Sigmoid colon (tissue), 7 donors: ENCODE measurements at regions of chr2 and their contacts with region 1.

Region 1: DNA sequence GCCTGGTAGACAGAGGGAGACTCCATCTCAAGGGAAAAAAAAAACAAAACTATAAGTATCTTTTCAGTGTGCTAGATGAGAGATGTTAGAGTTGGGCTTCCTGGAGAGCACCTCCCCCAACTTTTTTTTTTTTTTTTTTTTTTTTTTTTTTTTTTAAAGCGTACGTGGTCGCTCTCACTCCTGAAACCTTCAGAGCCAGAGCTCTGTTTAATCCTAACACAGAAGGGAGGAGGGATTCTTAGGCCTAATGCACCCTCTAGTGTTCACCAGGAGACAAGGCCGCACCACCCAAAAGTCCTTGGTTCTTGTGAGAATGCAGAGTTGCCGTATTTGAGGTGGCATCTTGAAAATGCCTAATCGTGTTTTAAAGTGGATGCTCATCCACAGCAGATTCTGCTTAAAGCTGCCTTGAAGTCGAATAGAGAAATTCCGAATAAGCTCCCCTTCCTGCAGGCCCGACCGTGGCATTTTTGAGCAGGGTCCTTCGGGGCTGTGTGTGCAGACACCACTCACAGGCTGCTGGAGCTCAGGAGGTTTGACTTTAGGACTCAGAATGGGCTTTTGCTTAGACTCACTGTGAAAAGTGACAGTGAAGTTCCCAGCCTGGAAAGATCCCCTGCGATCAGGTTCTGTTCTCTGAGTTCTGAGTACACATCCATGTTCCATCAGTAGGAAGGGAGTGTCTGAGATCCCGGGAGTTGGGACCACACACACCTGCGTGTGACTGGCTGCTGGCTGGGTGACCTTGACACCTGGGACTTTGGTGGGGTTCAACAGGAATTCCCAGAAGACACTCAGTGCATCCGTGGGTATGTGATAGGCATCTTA is 252.6 kb downstream of the AGAP1 start:
- DNase-seq: peak; percentile 88
- H3K4me3 ChIP-seq: no peak overlapping the region
- H3K27ac ChIP-seq: peak overlapping the region; percentile 43 to 83 (median 65)
- H3K4me1 ChIP-seq: peaks cover 0 to 49% (median 41%) of the 10 kb centered on the region in 4 donors
- H3K27me3 ChIP-seq: no peaks in the 10 kb centered on the region
- CTCF ChIP-seq: peak; percentile 72 to 82 (median 78)
- EP300 ChIP-seq: no peak
- POLR2A ChIP-seq: no peak

Region 2: GRCh38 chr2:234544659-234545611 is 1201.5 kb before region 1 on chr2:
- intact Hi-C with region 1: loop called (anchors 10 kb)
- DNase-seq: peak; percentile 76
- H3K4me3 ChIP-seq: no peak overlapping the region
- H3K27ac ChIP-seq: no peak overlapping the region
- H3K4me1 ChIP-seq: no peaks in the 10 kb centered on the region
- H3K27me3 ChIP-seq: peaks cover 0 to 11% (median 0%) of the 10 kb centered on the region in 3 donors
- CTCF ChIP-seq: peak; percentile 62 to 91 (median 77)
- EP300 ChIP-seq: no peak
- POLR2A ChIP-seq: no peak

Region 3: DNA sequence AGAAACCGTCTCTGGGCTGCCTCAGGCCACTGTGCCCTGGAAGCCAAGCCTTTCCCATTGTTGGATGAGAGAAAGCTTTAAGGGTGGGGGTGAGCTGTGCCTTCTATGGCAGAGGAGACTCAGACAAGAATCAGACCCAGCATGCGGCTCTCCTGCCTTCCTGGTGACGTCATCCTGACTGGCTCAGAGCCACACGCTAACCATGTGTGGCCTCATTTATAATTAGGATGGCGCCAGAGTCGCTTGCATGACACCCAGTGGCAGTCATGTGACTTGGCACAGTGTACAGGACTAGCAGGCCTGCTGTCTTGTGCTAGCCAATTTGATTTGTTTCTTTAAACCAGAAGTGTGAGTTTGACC is 695.5 kb before region 1 on chr2:
- intact Hi-C with region 1: loop called (anchors 5 kb)
- DNase-seq: peak; percentile 95
- H3K4me3 ChIP-seq: peak overlapping the region in 2 of 4 donors; percentile 11 to 21
- H3K27ac ChIP-seq: peak overlapping the region; percentile 47 to 81 (median 78)
- H3K4me1 ChIP-seq: peaks cover 0 to 23% (median 10%) of the 10 kb centered on the region in 4 donors
- H3K27me3 ChIP-seq: no peaks in the 10 kb centered on the region
- CTCF ChIP-seq: no peak
- EP300 ChIP-seq: peak in 2 of 4 donors; percentile 56 to 88
- POLR2A ChIP-seq: no peak

Region 4: DNA sequence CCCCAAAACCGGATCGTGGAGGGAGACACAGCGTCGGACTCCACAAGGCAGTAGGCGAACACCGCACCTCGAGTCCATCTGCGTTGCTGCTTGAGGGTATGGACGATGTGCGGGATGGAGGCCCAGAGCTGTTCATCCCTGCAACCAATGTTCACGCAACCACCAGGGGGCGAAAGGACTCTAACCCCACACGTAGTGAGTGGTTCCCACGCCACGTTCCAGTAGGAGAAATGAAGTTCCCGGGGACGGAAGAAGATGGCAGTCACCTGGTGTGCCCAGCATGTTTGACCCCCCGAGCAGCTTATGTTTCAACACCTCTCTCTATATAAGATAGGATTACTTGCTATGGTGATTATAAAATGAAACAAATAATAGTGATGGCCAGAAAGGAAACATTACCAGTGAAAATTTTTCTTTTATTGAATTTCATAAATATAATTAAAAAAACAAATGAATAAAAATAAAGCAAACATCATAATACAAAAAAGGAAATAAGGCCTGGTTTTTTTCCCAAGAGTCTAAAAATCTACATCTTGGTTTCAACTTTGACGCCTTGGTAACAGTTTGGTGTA is 610.4 kb before region 1 on chr2:
- intact Hi-C with region 1: loop called (anchors 2 kb)
- DNase-seq: peak; percentile 90
- H3K4me3 ChIP-seq: no peak overlapping the region
- H3K27ac ChIP-seq: no peak overlapping the region
- H3K4me1 ChIP-seq: peaks cover 0 to 3% (median 0%) of the 10 kb centered on the region in 4 donors
- H3K27me3 ChIP-seq: no peaks in the 10 kb centered on the region
- CTCF ChIP-seq: peak; percentile 65 to 79 (median 74)
- EP300 ChIP-seq: no peak
- POLR2A ChIP-seq: no peak

Region 5: GRCh38 chr2:235493775-235494715 is 252.4 kb before region 1 on chr2 and contains the start of gene AGAP1:
- intact Hi-C with region 1: loop called (anchors 5 kb)
- DNase-seq: peak; percentile 94
- H3K4me3 ChIP-seq: peak within 1 kb of the TSS; percentile 51 to 80 (median 68)
- H3K27ac ChIP-seq: peak within 1 kb of the TSS; percentile 80 to 88 (median 87)
- H3K4me1 ChIP-seq: peaks cover 0 to 35% (median 28%) of the 10 kb centered on the region in 4 donors
- H3K27me3 ChIP-seq: no peaks in the 10 kb centered on the region
- CTCF ChIP-seq: no peak
- EP300 ChIP-seq: no peak
- POLR2A ChIP-seq: no peak
- total RNA-seq, gene AGAP1: 18.6 to 42.7 (median 23.8) TPM

Region 6: GRCh38 chr2:235595422-235596010 is 151.0 kb before region 1 on chr2:
- intact Hi-C with region 1: loop called (anchors 1 kb)
- DNase-seq: peak; percentile 87
- H3K4me3 ChIP-seq: no peak overlapping the region
- H3K27ac ChIP-seq: no peak overlapping the region
- H3K4me1 ChIP-seq: peaks cover 0 to 31% (median 19%) of the 10 kb centered on the region in 4 donors
- H3K27me3 ChIP-seq: no peaks in the 10 kb centered on the region
- CTCF ChIP-seq: peak; percentile 78 to 88 (median 86)
- EP300 ChIP-seq: no peak
- POLR2A ChIP-seq: no peak

Region 7: GRCh38 chr2:235675678-235676535 is 70.6 kb before region 1 on chr2:
- intact Hi-C with region 1: loop called (anchors 2 kb)
- DNase-seq: no peak
- H3K4me3 ChIP-seq: no peak overlapping the region
- H3K27ac ChIP-seq: peak overlapping the region in 1 of 4 donors; percentile 6
- H3K4me1 ChIP-seq: peaks cover 0 to 72% (median 45%) of the 10 kb centered on the region in 4 donors
- H3K27me3 ChIP-seq: no peaks in the 10 kb centered on the region
- CTCF ChIP-seq: peak in 1 of 4 experiments; percentile 11
- EP300 ChIP-seq: no peak
- POLR2A ChIP-seq: no peak

Region 8: DNA sequence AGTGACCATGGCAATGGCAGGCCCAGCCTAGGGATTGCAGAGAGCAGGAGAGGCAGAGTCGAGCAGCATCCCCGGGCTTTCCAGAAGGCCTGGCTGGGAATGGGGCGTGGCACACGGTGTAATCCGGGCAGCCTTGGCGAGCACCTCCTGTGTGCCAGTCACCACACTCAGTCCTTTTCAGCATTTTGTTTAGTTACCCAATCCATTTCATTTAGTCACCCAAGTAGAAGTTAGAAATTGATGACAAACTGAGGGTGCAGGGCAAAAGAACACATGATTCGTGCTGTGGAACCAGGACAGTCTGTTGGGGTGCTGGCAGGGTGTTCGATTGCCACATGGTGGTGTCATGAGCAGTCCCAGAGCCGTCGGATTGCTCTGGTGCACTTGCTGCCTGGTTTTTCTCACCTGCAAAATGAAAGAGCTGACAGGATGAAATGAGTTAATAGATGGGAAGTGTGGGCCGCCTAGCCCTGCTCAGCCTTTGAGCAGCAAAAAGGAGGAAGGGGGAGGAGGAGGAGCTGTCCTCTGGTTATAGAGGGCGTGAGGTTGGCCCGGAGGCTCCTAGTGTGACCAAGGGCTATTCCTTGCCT is 46.8 kb after region 1 on chr2:
- intact Hi-C with region 1: no loop called
- DNase-seq: peak; percentile 58
- H3K4me3 ChIP-seq: no peak overlapping the region
- H3K27ac ChIP-seq: no peak overlapping the region
- H3K4me1 ChIP-seq: peaks cover 0 to 8% (median 7%) of the 10 kb centered on the region in 4 donors
- H3K27me3 ChIP-seq: no peaks in the 10 kb centered on the region
- CTCF ChIP-seq: peak in 2 of 4 experiments; percentile 21 to 46
- EP300 ChIP-seq: no peak
- POLR2A ChIP-seq: no peak

Region 9: GRCh38 chr2:235850771-235851551 is 104.5 kb after region 1 on chr2:
- intact Hi-C with region 1: no loop called
- DNase-seq: no peak
- H3K4me3 ChIP-seq: no peak overlapping the region
- H3K27ac ChIP-seq: no peak overlapping the region
- H3K4me1 ChIP-seq: no peaks in the 10 kb centered on the region
- H3K27me3 ChIP-seq: no peaks in the 10 kb centered on the region
- CTCF ChIP-seq: no peak
- EP300 ChIP-seq: no peak
- POLR2A ChIP-seq: no peak

Region 10: GRCh38 chr2:236284208-236284607 is 537.7 kb after region 1 on chr2:
- intact Hi-C with region 1: no loop called
- DNase-seq: no peak
- H3K4me3 ChIP-seq: no peak overlapping the region
- H3K27ac ChIP-seq: no peak overlapping the region
- H3K4me1 ChIP-seq: no peaks in the 10 kb centered on the region
- H3K27me3 ChIP-seq: peaks cover 0 to 5% (median 0%) of the 10 kb centered on the region in 3 donors
- CTCF ChIP-seq: no peak
- EP300 ChIP-seq: no peak
- POLR2A ChIP-seq: no peak

Region 11: DNA sequence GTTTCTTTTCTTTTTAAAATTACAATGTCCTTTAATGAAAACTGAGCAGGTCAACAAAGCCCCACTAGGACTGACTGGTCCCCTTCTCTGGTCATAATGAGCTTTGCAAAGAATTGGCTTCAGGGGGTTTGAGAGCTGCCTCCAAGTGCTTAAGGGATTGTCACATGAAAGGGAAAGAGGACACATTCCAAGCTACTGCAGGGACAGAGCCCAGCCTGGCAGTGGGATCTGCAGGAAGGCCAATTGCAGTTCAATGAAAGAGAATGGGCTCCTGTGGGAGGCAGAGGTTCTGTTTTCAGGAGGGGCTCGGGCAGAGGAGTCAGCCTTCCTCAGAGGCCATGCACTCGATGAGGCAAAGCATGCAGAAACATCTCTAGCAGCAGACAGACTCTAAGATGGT is 739.0 kb after region 1 on chr2:
- intact Hi-C with region 1: no loop called
- DNase-seq: no peak
- H3K4me3 ChIP-seq: no peak overlapping the region
- H3K27ac ChIP-seq: no peak overlapping the region
- H3K4me1 ChIP-seq: no peaks in the 10 kb centered on the region
- H3K27me3 ChIP-seq: no peaks in the 10 kb centered on the region
- CTCF ChIP-seq: no peak
- EP300 ChIP-seq: no peak
- POLR2A ChIP-seq: no peak